ENCODE measurements at regions of chr19 and their contacts with region 1.

Region 1: GRCh38 chr19:15091901-15092753 is 10.1 kb downstream of the OR1I1 start:
- DNase-seq: peak; percentile 61 to 88 (median 84)
- ATAC-seq: peak; percentile 73
- H3K4me3 ChIP-seq: no peak overlapping the region
- H3K27ac ChIP-seq: peak overlapping the region in 1 of 4 donors; percentile 70
- H3K4me1 ChIP-seq: peaks cover 5% of the 10 kb centered on the region
- H3K27me3 ChIP-seq: peaks cover 0 to 3% of the 10 kb centered on the region in 2 donors
- CTCF ChIP-seq: peak; percentile 44 to 91 (median 69)
- POLR2A ChIP-seq: no peak

Region 2: GRCh38 chr19:14889994-14890642 is 202.0 kb before region 1 on chr19:
- intact Hi-C with region 1: no loop called
- DNase-seq: no peak
- ATAC-seq: no peak
- H3K4me3 ChIP-seq: no peak overlapping the region
- H3K27ac ChIP-seq: no peak overlapping the region
- H3K4me1 ChIP-seq: peaks cover 6% of the 10 kb centered on the region
- H3K27me3 ChIP-seq: no peaks in the 10 kb centered on the region
- CTCF ChIP-seq: no peak
- POLR2A ChIP-seq: no peak

Region 3: GRCh38 chr19:15154002-15154612 is 62.0 kb after region 1 on chr19:
- intact Hi-C with region 1: loop called (anchors 5 kb)
- DNase-seq: no peak
- ATAC-seq: no peak
- H3K4me3 ChIP-seq: no peak overlapping the region
- H3K27ac ChIP-seq: no peak overlapping the region
- H3K4me1 ChIP-seq: no peaks in the 10 kb centered on the region
- H3K27me3 ChIP-seq: no peaks in the 10 kb centered on the region
- CTCF ChIP-seq: peak in 2 of 7 experiments; percentile 18
- POLR2A ChIP-seq: no peak

Region 4: DNA sequence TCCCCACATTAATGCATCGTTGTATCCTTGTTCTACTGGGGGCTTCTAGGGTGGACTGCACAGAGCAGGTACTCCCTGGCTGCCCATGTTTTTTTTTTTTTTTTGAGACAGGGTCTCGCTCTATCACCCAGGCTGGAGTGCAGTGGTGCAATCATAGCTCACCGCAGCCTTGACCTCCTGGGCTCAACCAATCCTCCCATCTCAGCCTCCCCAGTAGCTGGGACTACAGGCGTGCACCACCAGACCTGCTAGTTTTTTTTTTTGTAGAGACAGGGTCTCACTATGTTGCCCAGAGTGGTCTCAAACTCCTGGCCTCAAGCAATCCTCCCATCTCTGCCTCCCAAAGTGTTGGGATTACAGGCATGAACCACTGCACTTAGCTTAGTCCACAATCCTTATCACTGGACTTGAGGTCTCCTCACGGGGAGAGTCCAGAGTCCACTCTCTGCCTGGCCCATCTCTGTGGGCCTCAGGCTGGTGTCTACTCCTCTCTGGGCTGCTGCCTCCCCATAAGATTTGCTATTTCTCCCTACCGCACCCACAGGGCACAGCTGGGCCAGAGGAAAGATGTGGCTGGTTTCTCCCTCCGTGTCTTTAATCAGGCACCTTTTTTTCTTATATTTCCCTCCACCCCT is 472.5 kb after region 1 on chr19:
- intact Hi-C with region 1: loop called (anchors 5 kb)
- DNase-seq: no peak
- ATAC-seq: no peak
- H3K4me3 ChIP-seq: no peak overlapping the region
- H3K27ac ChIP-seq: no peak overlapping the region
- H3K4me1 ChIP-seq: peaks cover 6% of the 10 kb centered on the region
- H3K27me3 ChIP-seq: no peaks in the 10 kb centered on the region
- CTCF ChIP-seq: no peak
- POLR2A ChIP-seq: no peak

Measured in body of pancreas (tissue), 4 donors.